ENCODE measurements at regions of chr21 and their contacts with region 1.

Region 1: DNA sequence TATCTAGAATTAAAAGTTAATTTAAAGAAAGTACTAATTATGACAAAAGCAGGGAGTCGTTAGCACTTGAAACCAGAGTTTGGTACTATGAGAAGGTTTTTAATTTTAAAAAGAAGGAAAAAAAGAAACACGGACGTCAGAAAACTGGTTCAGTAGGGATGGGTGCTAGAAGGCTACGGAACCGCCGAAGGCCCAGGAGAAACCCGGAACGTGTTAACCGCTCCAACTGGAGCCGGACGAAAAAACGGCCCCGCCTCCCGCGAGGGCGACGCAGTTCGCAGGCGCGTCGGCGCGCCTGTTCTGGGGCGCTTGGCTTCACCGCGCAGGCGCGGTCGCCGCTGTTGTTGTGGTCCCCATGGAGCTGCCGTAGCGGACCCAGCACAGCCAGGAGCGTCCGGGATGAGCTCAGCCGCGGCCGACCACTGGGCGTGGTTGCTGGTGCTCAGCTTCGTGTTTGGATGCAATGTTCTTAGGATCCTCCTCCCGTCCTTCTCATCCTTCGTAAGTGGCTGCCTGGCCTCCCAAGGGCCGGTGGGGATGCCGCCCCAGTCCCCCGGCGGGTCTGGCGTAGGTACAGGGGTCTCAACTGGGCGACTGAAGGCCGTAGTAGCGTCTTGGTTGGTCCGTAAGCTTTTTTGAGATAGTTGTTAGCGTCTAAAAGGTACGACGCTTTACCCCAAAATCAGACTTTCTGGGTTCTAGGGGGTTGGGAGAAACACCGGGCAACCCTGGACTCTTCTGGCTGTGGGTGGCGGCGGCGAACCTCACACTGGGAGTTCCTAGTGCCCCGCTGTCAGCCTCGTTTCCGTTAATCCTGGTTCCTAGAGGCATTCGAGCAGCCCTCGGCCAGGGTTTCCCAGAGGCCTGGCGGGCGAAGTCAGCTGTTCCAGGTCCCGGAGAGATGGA is 31.4 kb upstream of the HMGN1 start:
- DNase-seq: peak; percentile 85
- ATAC-seq: peak; percentile 97
- H3K4me3 ChIP-seq: peak overlapping the region; percentile 82 to 97 (median 91)
- H3K27ac ChIP-seq: peak overlapping the region; percentile 75
- H3K4me1 ChIP-seq: peaks cover 38% of the 10 kb centered on the region
- H3K27me3 ChIP-seq: no peaks in the 10 kb centered on the region; a peak in 1 of 5 replicates
- CTCF ChIP-seq: no peak
- EP300 ChIP-seq: no peak
- POLR2A ChIP-seq: peak in 1 of 2 experiments; percentile 69; a peak in 2 of 4 replicates
- RAD21 ChIP-seq: no peak

Region 2: DNA sequence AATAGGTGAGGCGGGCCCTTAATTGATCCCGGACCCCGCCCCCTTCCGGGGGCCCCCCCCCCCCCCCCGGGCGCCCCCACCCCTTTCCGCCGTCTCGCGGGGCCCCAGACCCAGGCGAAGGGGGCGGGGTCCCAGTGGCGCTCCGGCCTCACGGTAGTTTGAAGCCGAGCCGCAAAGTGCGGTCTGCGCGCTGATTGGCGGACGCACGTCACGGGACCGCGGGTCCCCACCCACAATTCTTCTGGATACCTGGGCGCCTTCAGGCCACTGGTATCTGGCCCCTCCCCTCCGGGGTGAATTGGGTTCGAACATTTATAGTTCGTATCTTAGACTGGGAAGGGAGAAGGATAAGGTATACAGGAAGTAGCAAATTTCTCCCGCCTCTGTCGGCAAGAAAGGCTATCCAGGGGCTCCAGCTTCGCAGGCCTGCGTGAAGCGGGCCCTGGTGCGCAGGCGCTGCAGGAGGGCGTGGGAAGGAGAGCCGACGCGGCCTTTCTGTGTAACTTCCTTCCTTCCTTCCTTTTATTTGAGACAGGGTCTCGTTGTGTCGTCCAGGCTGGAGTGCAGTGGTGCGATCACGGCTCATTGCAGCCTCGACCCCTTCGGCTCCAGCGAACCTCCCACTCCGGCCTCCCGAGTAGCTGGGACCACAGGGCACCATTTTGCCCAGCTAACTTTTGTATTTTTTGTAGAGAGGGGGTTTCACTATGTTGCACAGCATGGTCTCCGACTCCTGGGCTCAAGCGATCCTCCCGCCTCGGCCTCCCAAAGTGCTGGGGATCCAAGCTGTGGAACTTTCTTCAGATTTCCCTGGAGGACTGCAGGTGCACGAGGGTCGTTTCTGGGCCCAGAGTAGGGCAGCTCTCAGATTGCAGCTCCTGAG is 30.8 kb before region 1 on chr21:
- CTCF ChIA-PET with region 1: no interaction called
- POLR2A ChIA-PET with region 1: interaction called, 29 read pairs
- in situ Hi-C with region 1: loop called (anchors 5 kb)
- intact Hi-C with region 1: no loop called
- DNase-seq: peak; percentile 93
- ATAC-seq: peak; percentile 95
- H3K4me3 ChIP-seq: peak overlapping the region; percentile 73 to 83 (median 82)
- H3K27ac ChIP-seq: peak overlapping the region; percentile 96
- H3K4me1 ChIP-seq: peaks cover 40% of the 10 kb centered on the region
- H3K27me3 ChIP-seq: no peaks in the 10 kb centered on the region; a peak in 1 of 5 replicates
- CTCF ChIP-seq: no peak
- EP300 ChIP-seq: no peak
- POLR2A ChIP-seq: peak; percentile 56 to 91; a peak in 3 of 4 replicates
- RAD21 ChIP-seq: peak; percentile 25; the same call in 1 of the 2 replicates

Region 3: GRCh38 chr21:39647476-39647875 is 267.2 kb after region 1 on chr21:
- CTCF ChIA-PET with region 1: no interaction called
- POLR2A ChIA-PET with region 1: no interaction called
- in situ Hi-C with region 1: no loop called
- intact Hi-C with region 1: no loop called
- DNase-seq: no peak
- ATAC-seq: no peak
- H3K4me3 ChIP-seq: no peak overlapping the region
- H3K27ac ChIP-seq: no peak overlapping the region
- H3K4me1 ChIP-seq: no peaks in the 10 kb centered on the region
- H3K27me3 ChIP-seq: no peaks in the 10 kb centered on the region
- CTCF ChIP-seq: no peak
- EP300 ChIP-seq: no peak
- POLR2A ChIP-seq: no peak
- RAD21 ChIP-seq: no peak